Endothelial cell of umbilical vein (primary cell): ENCODE measurements at regions of chr14 and their contacts with region 1.

Region 1: DNA sequence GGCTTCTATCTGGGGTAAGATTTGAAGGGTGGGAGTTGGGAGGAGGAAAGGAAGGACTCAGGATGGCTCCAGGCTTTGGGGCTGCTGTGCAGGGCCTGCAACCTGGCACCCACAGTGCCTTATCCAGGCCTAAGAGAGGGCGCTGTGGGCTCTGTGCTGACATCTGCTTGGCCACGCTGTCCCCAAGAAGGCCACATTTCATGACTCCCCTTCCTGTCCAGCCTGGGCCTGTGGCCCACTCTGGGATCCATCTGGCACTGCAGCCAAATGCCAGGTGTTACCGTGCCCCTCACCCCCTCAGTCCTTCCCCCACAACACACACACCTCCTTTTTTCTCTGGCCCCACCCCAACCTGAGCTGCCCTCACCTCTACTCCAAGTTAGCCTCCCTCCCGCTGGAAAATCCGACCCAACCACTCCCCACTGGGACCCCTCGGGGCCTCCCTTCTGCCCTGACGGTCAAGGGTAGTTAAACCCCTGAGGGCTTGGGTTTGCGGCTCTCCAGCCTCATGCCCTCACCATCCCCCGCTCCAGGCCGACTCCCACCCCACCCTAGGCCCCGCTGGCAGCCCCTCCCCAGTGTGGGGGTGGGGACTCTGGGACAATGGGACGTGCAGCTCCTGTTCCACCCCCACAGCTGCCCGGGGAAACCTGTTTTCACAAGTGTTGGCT is 7.8 kb upstream of the PPP1R13B start:
- DNase-seq: peak; percentile 55
- H3K4me3 ChIP-seq: no peak overlapping the region
- H3K27ac ChIP-seq: no peak overlapping the region
- H3K4me1 ChIP-seq: peaks cover 21% of the 10 kb centered on the region
- H3K27me3 ChIP-seq: no peaks in the 10 kb centered on the region
- CTCF ChIP-seq: no peak
- POLR2A ChIP-seq: no peak

Region 2: DNA sequence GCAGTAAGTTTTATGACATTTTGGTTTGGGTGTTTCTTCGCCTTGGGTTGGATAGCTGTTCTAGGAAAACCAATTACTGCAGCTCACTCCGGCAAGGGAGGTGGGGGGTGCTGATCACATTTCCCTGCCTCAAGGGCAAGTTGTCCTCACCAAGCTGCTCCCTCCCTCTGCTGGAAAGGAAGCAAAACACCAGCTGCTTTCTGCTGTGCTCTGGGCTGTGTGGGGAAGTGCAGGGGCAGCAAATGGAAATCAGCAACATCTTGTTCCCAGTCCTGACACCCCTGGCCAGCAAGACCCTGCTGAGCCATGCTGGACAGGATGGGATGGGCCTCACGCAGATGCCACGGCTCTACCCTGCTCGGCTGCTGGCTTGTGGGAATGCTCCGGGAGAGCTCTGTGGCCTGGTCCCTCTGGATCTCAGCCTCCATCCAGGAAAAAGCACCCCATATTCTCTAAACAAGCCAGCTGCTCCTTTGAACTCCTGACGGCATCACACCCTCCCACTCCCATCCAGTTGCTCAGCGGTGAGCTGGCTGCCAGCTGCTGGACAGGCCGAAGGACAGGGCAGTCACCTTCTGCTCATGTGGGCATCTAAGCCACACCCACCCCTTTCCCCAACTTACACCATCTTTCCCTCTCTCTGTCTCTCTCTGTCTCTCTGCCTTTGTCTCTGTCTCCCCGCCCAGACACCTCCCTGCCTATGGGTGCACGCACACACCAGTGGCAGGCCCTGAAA is 573.5 kb before region 1 on chr14:
- CTCF ChIA-PET with region 1: no interaction called
- POLR2A ChIA-PET with region 1: no interaction called
- dilution Hi-C with region 1: no loop called
- intact Hi-C with region 1: no loop called
- DNase-seq: peak; percentile 27
- H3K4me3 ChIP-seq: no peak overlapping the region
- H3K27ac ChIP-seq: no peak overlapping the region
- H3K4me1 ChIP-seq: no peaks in the 10 kb centered on the region
- H3K27me3 ChIP-seq: peaks cover 31 to 51% of the 10 kb centered on the region in 2 experiments
- CTCF ChIP-seq: peak; percentile 5 to 48
- POLR2A ChIP-seq: no peak

Region 3: GRCh38 chr14:103832046-103832445 is 23.2 kb before region 1 on chr14:
- CTCF ChIA-PET with region 1: no interaction called
- POLR2A ChIA-PET with region 1: no interaction called
- dilution Hi-C with region 1: no loop called
- intact Hi-C with region 1: no loop called
- DNase-seq: no peak
- H3K4me3 ChIP-seq: no peak overlapping the region
- H3K27ac ChIP-seq: no peak overlapping the region
- H3K4me1 ChIP-seq: peaks cover 7% of the 10 kb centered on the region
- H3K27me3 ChIP-seq: no peaks in the 10 kb centered on the region
- CTCF ChIP-seq: no peak
- POLR2A ChIP-seq: no peak

Region 4: DNA sequence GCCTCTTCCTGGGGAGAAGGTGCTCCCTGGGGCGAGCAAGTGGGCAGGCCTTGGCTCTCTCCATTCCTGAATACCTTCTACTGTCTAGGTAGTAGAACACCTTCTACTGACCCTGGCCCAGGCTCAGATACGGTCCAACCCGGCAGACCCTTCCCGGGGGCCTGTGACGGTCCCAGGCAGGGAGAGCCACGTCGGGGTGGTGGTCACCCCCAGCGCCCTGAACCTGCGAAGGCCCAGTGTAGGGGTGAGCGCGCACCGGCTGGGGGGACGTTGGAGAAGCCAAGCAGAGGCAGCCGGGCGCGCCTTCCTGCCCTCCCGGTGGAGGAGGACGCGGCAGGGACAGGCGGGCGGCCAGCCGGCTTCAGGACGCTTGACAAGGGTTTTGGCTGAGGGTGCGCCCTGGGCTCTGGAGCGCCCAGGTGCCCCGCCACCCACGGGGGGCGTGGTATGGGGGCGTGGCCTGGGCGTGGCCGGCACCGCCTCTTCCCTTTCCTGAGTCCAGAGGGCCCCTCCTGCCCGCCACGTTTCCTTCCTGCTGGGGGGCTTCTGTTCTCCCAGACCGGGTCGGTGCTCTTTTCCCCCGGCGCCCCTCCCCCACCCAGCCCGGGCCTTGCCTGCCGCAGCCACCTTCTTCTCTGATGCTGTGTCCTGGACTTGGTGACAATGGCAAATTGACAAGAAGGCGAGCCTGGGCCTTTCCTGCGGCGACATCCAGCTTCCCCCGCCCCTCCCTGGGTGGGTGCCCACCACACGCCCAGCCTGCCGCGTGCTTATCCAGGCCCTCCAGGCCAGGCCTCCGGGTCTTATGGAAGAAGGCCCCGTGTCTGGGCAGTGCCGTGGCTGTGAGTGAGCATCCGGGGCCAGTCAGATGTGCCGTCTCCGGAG is 16.6 kb after region 1 on chr14:
- CTCF ChIA-PET with region 1: interaction called, 3 read pairs
- POLR2A ChIA-PET with region 1: interaction called, 3 read pairs
- dilution Hi-C with region 1: no loop called
- intact Hi-C with region 1: loop called (anchors 1 kb)
- DNase-seq: no peak
- H3K4me3 ChIP-seq: no peak overlapping the region
- H3K27ac ChIP-seq: peak overlapping the region; percentile 8
- H3K4me1 ChIP-seq: peaks cover 11% of the 10 kb centered on the region
- H3K27me3 ChIP-seq: no peaks in the 10 kb centered on the region
- CTCF ChIP-seq: no peak
- POLR2A ChIP-seq: no peak